Cardiac septum (tissue), 1 donor: ENCODE measurements at regions of chr7 and their contacts with region 1.

Region 1: DNA sequence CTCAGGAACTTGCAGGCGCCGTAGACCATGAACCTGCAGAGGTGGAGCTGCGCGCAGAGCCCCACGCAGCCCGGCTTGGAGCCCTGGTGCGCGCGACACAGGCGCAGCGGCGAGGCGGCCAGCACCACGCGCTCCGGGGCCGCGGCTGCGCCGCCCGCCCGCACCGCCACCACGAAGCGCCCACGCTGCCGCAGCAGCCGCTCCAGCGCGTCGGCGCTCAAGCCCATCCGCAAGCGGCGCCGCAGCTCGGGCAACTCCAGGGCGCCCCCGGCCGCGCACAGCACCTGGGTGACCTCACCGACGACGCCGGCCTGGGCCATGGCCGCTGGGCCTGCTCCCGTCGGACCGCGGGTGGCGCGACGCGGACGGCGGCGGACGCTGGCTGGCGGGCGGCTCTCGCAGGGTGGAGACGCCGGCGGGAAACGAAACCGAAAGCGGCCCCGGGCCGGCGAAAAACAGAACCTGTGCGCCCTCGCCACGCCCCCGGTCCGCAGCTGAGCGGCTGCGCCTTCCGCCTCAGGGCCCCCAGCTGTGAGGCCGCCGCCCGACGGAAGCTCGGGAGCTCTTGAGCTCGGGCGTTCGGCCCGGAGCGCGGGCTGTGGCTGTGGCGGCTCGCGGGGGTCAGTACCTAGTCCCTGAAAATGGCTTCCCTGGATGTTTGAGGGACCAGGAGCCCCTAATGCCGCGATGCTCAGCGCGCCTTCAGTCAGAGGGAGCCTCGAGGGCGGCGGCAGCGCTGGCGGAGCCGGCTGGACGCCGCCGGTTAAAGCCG is at the start of gene PARP12:
- DNase-seq: peak; percentile 97
- total RNA-seq, gene PARP12: 12.5 TPM

Region 2: DNA sequence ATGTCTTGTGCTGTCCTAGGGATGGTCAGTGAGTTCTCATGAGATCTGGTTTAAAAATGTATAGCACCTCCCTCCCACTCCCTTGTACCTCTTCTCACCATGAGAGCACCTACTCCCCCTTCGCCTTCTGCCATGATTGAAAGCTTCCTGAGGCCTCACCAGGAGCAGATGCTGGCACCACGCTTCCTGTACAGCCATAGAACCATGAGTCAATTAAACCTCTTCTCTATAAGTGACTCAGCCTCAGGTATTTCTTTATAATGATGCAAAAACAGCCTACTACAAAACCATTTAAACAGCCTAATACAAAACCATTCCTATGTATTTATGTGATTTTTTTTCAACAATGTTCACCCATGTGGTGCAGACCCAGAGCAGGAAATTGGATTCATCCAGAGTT is 82.1 kb after region 1 on chr7:
- intact Hi-C with region 1: no loop called
- DNase-seq: no peak

Region 3: DNA sequence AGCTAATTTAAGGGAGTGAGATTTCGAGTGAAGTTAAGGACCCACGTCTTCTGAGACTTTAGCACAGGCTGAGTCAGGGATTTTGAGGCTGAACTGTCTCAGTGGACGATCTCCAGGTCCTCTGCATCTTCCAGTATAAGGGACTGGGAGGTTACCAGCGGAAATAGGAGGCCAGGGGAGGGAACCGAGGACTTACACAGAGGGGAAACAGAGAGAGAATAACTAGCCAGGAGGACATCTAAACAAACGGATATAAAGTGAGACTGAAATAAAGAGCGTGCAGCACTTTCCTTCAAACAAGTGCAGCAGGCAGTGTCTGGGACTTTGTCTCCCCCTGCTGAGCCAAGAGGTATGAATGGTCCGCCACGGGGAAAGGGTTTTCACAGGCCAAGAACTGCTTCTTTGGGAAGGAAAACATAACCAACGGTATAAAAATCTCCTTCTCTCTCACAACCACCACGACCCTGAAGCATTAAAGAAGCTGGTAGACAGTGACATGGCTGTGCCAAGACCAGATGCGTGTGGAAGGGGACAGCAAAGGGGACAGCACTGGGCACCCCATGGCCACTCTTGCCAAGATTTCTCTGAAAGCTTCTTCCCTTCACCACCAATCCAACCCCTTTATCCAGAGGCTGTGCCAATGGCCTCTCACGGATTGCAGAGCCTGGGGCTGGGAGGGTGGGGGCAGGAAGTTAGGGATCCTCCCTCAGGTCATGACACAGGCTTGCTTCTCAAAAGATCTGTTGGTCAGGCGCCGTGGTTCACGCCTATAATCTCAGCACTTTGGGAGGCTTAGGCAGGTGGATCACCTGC is 263.6 kb after region 1 on chr7:
- intact Hi-C with region 1: loop called (anchors 10 kb)
- DNase-seq: peak; percentile 83